ENCODE measurements at regions of chr21 and their contacts with region 1.

Region 1: DNA sequence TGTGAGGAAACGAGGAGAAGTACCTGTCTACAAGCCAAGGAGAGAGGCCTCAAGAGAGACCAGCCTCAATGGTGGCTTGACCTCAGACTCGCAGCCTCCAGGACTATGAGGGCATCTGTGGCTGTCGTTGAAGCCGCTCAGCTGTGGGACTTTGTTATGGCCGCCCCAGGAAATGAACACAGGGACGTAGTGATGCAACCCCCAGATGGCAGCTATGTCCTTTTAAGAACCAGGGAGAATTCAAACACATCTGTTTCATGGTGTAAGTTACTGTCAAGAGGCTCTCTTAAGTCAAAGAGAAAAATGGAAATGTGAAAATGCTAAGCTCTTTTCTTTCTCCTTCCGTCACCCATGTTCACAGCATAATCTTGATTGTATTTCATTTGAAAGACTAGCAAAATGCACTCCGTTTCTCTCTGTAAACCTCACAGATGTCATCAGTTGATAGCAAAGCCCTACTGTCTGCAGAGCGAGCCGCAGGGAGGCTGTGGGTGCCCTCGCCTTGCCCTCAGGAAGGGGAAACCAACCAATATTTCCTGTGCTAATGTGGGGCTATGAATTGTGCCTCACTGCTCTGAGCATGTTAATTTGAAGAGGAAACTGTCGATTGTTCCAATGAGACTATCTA is 21.3 kb downstream of the UBASH3A start:
- DNase-seq: peak; percentile 74
- H3K4me3 Mint-ChIP-seq: peak overlapping the region; percentile 76
- H3K27ac Mint-ChIP-seq: peak overlapping the region; percentile 95
- H3K4me1 Mint-ChIP-seq: peaks cover 67% of the 10 kb centered on the region
- H3K27me3 Mint-ChIP-seq: no peaks in the 10 kb centered on the region

Region 2: DNA sequence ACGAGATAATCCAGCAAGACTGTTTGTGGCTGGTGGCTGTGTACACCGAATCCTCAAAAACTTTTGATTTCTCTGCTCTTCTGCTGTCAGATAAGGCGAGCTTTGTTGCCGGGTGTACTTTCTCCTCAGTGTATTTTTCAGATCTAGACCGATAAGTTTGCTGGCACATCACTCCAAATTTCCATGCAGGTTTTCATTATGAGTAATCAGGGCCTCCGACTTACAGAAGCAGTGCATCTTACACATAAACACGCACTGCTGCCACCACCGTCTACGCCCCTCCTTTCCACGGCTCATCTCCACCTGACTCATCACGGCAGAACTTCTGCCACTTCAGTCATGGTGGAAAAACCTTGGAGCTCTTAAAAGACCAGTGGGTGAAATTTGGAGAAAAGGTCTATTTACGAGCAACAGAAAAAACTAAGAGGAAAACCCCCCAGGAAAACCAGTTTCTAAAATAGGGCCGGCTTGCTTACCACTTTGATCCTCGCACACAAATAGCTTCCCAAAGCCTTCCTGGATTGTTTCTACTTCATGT is 422.5 kb before region 1 on chr21:
- intact Hi-C with region 1: loop called (anchors 5 kb)
- DNase-seq: peak; percentile 78
- H3K4me3 Mint-ChIP-seq: peak overlapping the region; percentile 34
- H3K27ac Mint-ChIP-seq: peak overlapping the region; percentile 85
- H3K4me1 Mint-ChIP-seq: peaks cover 58% of the 10 kb centered on the region
- H3K27me3 Mint-ChIP-seq: no peaks in the 10 kb centered on the region

Region 3: DNA sequence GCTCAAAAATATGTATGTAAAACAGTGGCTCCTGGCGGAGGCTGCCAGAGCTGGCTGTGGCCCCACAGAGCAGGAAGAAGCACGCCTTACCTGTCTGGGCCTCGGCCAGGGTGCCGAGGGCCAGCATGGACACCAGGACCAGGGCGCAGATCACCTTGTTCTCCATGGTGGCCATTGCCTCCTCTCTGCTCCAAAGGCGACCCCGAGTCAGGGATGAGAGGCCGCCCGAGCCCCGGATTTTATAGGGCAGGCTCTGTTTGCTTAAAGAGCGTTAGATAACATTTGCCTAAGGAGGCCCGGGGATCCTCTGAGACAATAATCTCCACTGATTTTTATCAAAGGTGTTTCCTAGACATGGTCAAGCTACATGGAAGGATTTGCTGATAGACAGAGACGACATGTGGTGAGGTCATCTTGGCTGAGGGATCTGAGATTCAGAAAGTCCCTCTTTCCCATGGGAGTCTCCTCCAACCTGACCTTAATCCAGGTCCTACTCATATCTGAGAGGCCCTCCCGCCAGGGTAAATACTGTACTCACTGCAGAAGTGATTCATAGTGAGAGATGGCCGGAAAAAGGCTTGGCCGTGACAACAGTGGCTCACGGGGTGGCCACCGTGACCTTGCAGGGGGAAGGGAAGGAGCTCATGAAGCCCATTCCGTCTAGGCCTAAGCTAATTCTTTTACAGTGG is 58.6 kb before region 1 on chr21 and contains the start of gene TFF1:
- intact Hi-C with region 1: no loop called
- DNase-seq: no peak
- H3K4me3 Mint-ChIP-seq: no peak within 1 kb of the TSS
- H3K27ac Mint-ChIP-seq: no peak within 1 kb of the TSS
- H3K4me1 Mint-ChIP-seq: no peaks in the 10 kb centered on the region
- H3K27me3 Mint-ChIP-seq: peaks cover 19% of the 10 kb centered on the region
- total RNA-seq, gene TFF1: not detected in 2 replicates

Region 4: DNA sequence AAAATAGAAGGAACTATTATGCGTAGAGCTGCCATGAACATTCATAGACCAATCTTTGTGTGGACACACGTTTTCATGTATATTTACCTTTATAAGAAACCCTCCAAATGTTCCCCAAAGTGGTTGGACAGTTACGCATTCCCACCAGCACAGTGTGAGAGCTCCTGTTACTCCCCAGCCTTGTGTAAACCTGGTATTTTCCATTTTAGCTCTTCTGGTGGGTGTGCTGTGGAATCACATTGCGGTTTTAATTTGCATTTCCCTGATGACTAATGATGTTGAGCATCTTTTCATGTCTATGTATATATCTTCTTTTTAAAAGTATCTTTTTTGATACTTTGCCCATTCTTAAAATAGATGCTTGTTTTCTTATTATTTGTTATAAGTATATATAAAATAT is 24.5 kb before region 1 on chr21:
- intact Hi-C with region 1: loop called (anchors 1 kb)
- DNase-seq: no peak
- H3K4me3 Mint-ChIP-seq: peak overlapping the region; percentile 58
- H3K27ac Mint-ChIP-seq: peak overlapping the region; percentile 88
- H3K4me1 Mint-ChIP-seq: peaks cover 65% of the 10 kb centered on the region
- H3K27me3 Mint-ChIP-seq: no peaks in the 10 kb centered on the region

Region 5: DNA sequence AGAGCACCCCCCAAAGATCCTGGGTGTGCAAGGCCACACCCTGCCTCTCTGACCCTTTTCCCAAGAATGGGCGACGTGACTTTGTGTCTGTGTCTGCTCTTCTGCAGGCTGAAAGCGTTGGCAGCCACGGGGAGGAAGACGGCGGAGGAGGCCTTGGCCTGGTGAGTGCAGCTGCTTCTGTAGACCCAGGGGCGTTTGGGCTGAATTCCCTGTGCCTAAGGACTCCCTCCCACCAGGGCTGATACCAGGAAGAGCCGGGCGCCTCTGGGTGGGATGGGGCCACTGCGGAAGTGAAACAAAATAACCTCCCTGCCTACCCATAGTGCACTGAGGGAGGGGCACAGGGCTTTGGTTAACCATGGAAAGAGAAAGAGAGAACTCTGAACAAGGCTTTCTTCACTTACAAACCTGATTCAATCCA is 18.8 kb before region 1 on chr21:
- intact Hi-C with region 1: loop called (anchors 1 kb)
- DNase-seq: peak; percentile 59
- H3K4me3 Mint-ChIP-seq: peak overlapping the region; percentile 92
- H3K27ac Mint-ChIP-seq: peak overlapping the region; percentile 94
- H3K4me1 Mint-ChIP-seq: peaks cover 58% of the 10 kb centered on the region
- H3K27me3 Mint-ChIP-seq: no peaks in the 10 kb centered on the region

Measured in activated T-helper 1 cell treated with anti-CD3 and anti-CD28 coated beads, Interleukin-12 subunit alpha, Interleukin-12 subunit beta, Interleukin-2, Interleukin-4 antibody, amounts not matched to agents 30 ng/mL and 10 ng/mL and 1 ng/mL, durations not matched to agents 14 hours and 24 hours and 36 hours (primary cell).